Left cardiac atrium (tissue), 4 donors: ENCODE measurements at regions of chr3 and their contacts with region 1.

Region 1: GRCh38 chr3:71069797-71070196 is 513.7 kb downstream of the FOXP1 start:
- DNase-seq: peak; percentile 78
- ATAC-seq: peak; percentile 35 to 58

Region 2: DNA sequence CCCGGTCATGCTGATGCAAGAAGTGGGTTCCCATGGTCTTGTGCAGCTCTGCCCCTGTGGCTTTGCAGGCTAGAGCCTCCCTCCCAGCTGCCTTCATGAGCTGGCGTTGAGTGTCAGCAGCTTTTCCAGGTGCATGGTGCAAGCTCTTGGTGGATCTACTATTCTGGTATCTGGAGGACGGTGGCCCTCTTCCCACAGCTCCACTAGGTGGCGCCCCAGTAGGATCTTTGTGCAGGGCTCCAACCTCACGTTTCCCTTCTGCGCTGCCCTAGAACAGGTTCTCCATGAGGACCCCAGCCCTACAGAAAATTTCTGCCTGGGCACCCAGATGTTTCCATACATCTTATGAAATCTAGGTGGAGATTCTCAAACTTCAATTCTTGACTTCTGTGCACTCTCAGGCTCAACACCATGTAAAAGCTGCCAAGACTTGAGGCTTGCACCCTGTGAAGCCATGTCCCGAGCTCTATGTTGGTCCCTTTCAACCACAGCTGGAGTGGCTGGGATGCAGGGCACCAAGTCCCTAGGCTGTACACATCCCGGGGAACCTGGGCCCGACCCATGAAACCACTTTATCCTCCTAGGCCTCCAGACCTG is 519.0 kb before region 1 on chr3:
- intact Hi-C with region 1: loop called in 1 of 2 experiments (anchors 10 kb)
- DNase-seq: peak; percentile 70
- ATAC-seq: peak; percentile 71 to 78

Region 3: DNA sequence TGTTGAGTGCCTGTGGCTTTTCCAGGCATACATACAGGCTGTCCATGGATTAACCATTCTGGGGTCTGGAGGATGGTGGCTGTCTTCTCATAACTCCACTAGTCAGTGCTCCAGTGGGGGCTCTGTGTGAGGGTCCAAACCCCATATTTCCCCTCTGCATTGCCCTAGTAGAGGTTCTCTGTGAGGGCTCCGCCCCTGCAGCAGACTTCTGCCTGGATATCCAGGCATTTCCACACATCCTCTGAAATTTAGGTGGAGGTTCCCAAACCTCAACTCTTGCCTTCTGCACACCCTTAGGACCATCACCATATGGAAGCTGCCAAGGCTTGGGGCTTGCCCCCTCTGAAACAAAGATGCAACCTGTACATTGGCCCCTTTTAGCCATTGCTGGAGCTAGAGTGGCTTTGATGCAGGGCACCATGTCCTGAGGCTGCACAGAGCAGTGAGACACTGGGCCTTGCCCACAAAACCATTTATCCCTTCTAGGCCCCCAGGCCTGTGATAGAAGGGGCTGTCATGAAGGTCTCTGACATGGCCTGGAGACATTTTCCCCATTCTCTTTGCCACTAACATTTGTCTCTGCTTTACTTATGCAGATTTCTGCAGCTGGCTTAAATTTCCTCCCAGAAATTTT is 357.2 kb before region 1 on chr3:
- intact Hi-C with region 1: no loop called
- DNase-seq: no peak
- ATAC-seq: no peak

Region 4: GRCh38 chr3:71006810-71007785 is 62.7 kb before region 1 on chr3:
- intact Hi-C with region 1: loop called in 1 of 2 experiments (anchors 5 kb)
- DNase-seq: no peak
- ATAC-seq: peak in 1 of 2 donors; percentile 60

Region 5: GRCh38 chr3:71031914-71032521 is 37.8 kb before region 1 on chr3:
- intact Hi-C with region 1: no loop called
- DNase-seq: peak; percentile 31
- ATAC-seq: peak; percentile 34 to 67

Region 6: GRCh38 chr3:71168880-71169411 is 99.1 kb after region 1 on chr3:
- intact Hi-C with region 1: no loop called
- DNase-seq: no peak
- ATAC-seq: peak in 1 of 2 donors; percentile 64

Region 7: DNA sequence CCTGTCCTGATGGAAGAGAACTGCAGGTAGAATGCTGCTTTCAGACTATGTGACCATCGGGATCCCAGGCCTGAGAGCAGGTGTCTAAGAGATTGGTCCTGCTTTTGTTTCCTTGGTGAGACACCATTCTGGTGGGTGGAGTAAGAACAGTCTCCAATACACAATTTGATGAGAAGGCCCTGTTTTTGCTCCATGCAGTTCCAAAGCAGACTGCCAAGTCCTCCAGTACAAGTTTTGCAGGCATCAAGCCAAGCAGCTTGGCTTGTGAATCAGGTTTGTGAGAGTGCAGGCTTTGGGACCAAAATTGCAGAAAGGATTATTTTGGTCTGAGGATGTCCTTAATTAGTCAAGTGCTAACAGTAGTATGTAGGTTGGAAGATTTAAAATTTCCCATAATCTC is 132.1 kb after region 1 on chr3:
- intact Hi-C with region 1: loop called in 1 of 2 experiments (anchors 10 kb)
- DNase-seq: peak; percentile 80
- ATAC-seq: peak; percentile 84 to 86

Region 8: DNA sequence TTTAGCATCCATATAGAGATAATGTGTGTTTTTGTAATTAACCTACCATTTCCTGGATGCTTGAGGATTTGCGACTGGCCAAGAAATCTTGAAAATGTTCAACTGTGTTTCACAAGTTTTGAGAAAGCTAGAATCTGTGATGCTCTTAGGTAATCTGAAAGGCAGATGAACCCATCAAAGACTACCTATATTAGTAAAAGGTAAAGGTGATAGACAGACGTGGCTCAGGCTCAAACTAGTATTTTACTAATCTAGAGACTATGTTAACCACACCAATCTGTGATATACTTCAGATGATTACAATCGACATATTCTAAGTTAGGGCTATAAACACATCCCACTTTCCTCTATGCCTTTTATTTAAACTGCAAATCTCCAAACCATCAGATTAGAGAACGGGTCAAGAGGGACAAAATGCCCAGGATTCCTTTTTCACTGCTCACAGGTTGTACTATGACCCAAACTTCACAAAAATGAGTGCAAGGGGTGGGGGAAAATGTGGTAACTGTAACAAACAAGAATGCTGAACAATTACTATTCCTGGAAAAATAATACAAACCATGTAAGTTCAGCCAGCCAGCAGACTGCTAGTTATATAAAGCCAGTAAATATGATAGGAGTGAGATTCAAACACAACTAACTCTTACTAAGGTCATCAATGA is 218.6 kb after region 1 on chr3:
- intact Hi-C with region 1: no loop called
- DNase-seq: no peak
- ATAC-seq: no peak